Activated naive CD4-positive, alpha-beta T cell treated with anti-CD3 and anti-CD28 coated beads for 36 hours (primary cell): ENCODE measurements at regions of chr7 and their contacts with region 1.

Region 1: GRCh38 chr7:143279186-143280098 is 5.3 kb upstream of the TMEM139 start:
- DNase-seq: no peak
- H3K4me3 Mint-ChIP-seq: peak overlapping the region; percentile 77
- H3K27ac Mint-ChIP-seq: peak overlapping the region; percentile 94
- H3K4me1 Mint-ChIP-seq: peaks cover 41% of the 10 kb centered on the region
- H3K27me3 Mint-ChIP-seq: no peaks in the 10 kb centered on the region

Region 2: DNA sequence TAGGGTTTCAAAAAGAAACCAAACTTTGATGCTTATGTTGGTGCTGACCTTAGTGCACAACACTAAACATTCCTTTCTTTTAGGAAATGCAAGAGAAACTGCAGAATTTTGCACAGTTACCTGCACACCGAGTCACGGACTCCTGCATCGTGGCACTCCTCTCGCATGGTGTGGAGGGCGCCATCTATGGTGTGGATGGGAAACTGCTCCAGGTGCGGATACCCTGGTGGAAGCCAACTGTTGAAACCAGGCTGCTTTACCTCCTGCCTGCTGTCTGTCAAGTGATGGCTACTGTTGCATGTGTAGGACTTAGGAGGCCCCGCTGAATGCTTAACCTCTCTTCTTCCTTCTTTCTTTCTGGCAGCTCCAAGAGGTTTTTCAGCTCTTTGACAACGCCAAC is 20.4 kb after region 1 on chr7:
- CTCF ChIA-PET with region 1: interaction called, 13 read pairs
- intact Hi-C with region 1: no loop called
- DNase-seq: peak; percentile 72
- H3K4me3 Mint-ChIP-seq: no peak overlapping the region
- H3K27ac Mint-ChIP-seq: peak overlapping the region; percentile 15
- H3K4me1 Mint-ChIP-seq: peaks cover 31% of the 10 kb centered on the region
- H3K27me3 Mint-ChIP-seq: no peaks in the 10 kb centered on the region

Region 3: DNA sequence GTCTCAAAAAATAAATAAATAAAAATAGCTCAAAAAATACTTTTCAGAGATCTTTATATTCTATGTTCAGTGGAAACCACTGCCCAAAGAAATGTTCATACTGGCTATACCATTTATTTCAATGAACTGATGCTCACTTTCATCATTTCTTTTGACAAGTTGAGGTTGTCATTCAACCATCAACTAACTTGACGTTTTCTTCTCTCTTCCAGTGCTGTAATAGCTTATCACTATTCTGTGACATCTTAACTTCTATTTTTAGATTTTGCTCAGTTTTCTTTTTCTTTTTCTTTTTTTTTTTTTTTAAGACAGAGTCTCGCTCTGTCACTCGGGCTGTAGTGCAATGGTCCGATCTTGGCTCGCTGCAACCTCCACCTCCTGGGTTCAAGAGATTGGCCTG is 895.2 kb after region 1 on chr7:
- CTCF ChIA-PET with region 1: no interaction called
- intact Hi-C with region 1: no loop called
- DNase-seq: no peak
- H3K4me3 Mint-ChIP-seq: no peak overlapping the region
- H3K27ac Mint-ChIP-seq: no peak overlapping the region
- H3K4me1 Mint-ChIP-seq: peaks cover 5% of the 10 kb centered on the region
- H3K27me3 Mint-ChIP-seq: peaks cover 2% of the 10 kb centered on the region